Activated naive CD4-positive, alpha-beta T cell treated with anti-CD3 and anti-CD28 coated beads for 36 hours (primary cell): ENCODE measurements at regions of chr11 and their contacts with region 1.

Region 1: GRCh38 chr11:17298302-17298701 is 21.8 kb downstream of the NUCB2 start:
- DNase-seq: peak; percentile 82
- H3K4me3 Mint-ChIP-seq: no peak overlapping the region
- H3K27ac Mint-ChIP-seq: peak overlapping the region; percentile 30
- H3K4me1 Mint-ChIP-seq: peaks cover 41% of the 10 kb centered on the region
- H3K27me3 Mint-ChIP-seq: no peaks in the 10 kb centered on the region

Region 2: DNA sequence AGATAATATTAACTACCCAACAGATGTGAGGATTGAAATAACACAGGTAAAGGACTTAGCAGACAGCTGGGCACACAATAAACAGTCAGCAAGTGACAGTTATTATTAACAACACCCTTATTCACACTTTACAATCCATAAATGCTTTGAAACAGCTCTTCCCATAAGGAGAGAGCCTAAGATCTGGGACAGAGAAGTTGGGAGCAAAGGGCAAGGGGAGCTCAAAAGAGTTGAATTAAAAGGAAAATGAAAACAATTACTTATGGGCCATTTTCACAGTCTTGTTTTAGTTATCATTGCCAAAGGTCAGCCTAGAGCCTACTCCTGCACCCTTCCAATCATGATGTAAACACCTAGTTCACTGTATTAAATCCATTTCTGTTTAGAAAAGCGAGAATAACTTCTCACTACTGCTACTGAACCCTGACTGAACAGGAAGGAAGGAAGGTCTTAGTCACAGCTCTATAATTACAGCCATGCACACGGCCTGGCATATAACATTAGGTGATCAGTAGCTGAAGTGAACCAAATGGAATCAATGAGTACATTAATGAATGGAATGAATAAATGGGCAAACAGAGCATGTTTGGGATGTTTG is 395.4 kb before region 1 on chr11:
- CTCF ChIA-PET with region 1: no interaction called
- intact Hi-C with region 1: loop called (anchors 2 kb)
- DNase-seq: peak; percentile 30
- H3K4me3 Mint-ChIP-seq: peak overlapping the region; percentile 3
- H3K27ac Mint-ChIP-seq: peak overlapping the region; percentile 92
- H3K4me1 Mint-ChIP-seq: peaks cover 43% of the 10 kb centered on the region
- H3K27me3 Mint-ChIP-seq: no peaks in the 10 kb centered on the region

Region 3: DNA sequence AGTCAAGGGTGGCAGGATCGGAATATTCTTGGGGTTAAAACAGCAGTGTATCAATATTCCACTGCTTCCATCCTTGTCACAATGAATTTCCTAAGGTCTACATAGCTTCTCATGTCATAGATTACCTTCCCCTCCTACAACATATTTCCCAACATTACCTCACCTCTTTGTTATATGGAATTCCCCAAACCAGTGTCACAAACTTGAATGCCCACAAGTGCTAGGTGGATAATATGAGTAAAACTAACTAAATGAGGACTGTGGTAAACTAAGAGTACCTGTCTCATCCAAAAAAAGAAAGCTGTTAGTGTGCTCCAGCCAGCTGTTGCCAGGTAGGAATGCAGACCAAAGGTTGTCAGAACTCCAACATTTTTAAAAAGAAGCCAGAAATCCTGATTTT is 38.8 kb before region 1 on chr11:
- CTCF ChIA-PET with region 1: no interaction called
- intact Hi-C with region 1: loop called (anchors 1 kb)
- DNase-seq: no peak
- H3K4me3 Mint-ChIP-seq: no peak overlapping the region
- H3K27ac Mint-ChIP-seq: no peak overlapping the region
- H3K4me1 Mint-ChIP-seq: peaks cover 21% of the 10 kb centered on the region
- H3K27me3 Mint-ChIP-seq: no peaks in the 10 kb centered on the region

Region 4: DNA sequence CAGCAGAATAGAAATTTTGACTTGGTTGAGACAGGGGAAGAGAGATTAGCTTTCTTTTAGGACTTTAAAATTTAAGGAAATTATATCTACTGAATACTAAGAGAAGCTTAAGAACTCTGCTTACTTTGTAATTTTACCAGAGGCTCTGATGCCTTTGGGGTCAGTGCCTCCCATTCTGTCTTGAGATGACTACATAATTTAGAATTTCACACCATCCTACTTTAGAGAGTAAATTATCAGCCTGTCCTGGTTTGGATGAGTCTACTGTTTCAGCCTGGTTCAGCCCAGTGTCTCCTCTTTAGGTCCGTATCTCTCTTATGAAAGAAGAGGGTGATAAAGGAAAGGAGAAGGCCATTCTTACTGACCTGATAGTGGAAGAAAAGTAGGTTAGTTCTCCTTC is 12.0 kb before region 1 on chr11:
- CTCF ChIA-PET with region 1: interaction called, 4 read pairs
- intact Hi-C with region 1: loop called (anchors 1 kb)
- DNase-seq: no peak
- H3K4me3 Mint-ChIP-seq: no peak overlapping the region
- H3K27ac Mint-ChIP-seq: peak overlapping the region; percentile 3
- H3K4me1 Mint-ChIP-seq: peaks cover 52% of the 10 kb centered on the region
- H3K27me3 Mint-ChIP-seq: no peaks in the 10 kb centered on the region

Region 5: DNA sequence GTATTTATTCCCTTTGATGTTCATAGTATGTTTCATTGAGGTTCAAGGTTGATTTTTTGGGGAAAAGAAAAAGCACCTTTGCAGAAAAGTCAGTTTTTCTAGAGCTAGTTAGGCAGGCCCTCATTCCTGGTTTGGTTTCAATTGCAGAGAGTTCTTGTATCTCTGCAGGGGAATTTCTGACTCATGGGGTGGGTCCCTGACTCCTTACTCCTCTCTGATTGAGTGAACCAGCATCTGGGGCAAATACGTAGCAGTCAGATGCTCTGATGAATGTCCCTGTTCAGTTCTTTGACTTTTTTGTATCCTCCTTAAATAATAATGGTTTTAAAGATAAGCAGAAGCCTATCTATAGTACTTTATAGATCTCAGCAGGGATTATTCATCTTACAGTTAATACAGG is 45.6 kb after region 1 on chr11:
- CTCF ChIA-PET with region 1: no interaction called
- intact Hi-C with region 1: loop called (anchors 1 kb)
- DNase-seq: peak; percentile 90
- H3K4me3 Mint-ChIP-seq: no peak overlapping the region
- H3K27ac Mint-ChIP-seq: peak overlapping the region; percentile 51
- H3K4me1 Mint-ChIP-seq: peaks cover 19% of the 10 kb centered on the region
- H3K27me3 Mint-ChIP-seq: no peaks in the 10 kb centered on the region